ENCODE measurements at regions of chr5 and their contacts with region 1.

Region 1: DNA sequence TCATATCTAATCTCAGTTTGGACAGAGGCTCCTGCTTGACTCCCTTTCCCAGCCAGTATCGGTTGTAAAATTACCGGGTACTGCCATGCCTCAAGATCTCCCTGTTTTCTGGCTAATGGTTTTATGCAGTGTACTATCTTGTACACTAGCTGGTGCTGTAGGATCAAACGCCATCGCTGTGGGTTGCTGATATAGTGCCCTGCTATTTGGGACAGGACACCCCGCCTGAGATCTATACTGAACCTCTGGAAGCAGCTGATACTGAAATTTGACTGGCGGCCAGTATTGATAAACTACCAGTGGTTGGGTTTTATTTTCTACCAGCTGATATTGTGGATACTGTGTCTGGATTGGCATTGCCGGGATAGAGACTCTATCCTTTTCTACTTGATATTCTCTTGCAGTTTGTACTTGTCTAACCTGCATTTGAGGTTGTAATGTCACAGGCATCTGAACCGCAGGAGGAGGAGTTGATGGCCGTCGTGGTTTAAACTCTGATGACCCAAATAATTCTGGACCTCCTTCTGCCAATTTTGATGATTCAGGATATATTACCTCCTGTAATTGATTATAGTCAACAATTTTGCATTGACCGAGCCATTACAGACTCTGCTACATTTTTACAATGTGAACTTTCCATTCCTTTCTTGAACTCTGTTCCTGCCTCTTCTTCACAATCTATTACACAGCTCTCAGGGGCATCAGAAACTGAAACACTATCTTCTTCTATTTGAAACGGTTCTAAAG is 112.5 kb upstream of the LARP1 start:
- H3K4me3 ChIP-seq: no peak overlapping the region
- H3K27ac ChIP-seq: no peak overlapping the region
- H3K4me1 ChIP-seq: no peaks in the 10 kb centered on the region; the same call in 1 of the 2 replicates
- CTCF ChIP-seq: peak; percentile 70

Region 2: GRCh38 chr5:153974131-153974812 is 668.4 kb before region 1 on chr5:
- CTCF ChIA-PET with region 1: interaction called, 14 read pairs
- POLR2A ChIA-PET with region 1: no interaction called
- H3K4me3 ChIP-seq: no peak overlapping the region
- H3K27ac ChIP-seq: no peak overlapping the region
- H3K4me1 ChIP-seq: no peaks in the 10 kb centered on the region
- CTCF ChIP-seq: peak; percentile 37; the same call in 1 of the 2 replicates

Region 3: DNA sequence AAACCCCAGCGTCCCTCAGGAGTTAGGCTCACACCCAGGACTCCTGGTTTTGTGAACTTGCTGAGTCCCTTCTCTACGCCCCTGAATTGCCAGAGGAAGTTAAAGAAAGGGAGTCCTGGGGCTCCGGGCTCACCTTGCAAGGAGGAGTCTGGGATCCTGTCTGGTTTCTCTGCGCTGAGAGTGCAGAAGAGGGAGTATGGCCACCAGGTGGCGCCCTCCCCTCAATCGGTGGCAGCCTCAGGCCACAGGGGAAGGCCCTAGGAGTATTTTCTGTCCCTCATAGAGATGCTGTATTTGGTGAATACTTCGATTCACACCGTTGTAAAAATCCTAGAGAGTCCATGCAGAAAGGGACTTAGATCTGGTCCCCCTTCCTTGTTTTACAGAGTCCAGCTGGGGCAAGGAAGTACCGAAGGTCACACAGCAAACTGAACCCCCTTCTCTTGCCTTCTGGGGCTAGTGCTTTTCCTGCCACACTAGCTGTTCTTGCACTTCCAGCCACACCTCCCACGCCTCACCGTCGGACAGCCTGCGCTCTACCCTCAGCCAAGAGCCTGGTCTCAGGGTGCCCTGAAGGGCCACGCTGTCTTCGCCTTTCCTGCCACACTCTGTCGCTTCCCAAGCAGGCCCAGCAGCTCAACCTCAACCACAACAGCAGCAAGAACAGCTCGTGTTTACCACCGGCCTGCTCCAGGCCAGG is 174.9 kb before region 1 on chr5:
- CTCF ChIA-PET with region 1: interaction called, 12 read pairs
- POLR2A ChIA-PET with region 1: no interaction called
- H3K4me3 ChIP-seq: no peak overlapping the region
- H3K27ac ChIP-seq: no peak overlapping the region
- H3K4me1 ChIP-seq: peaks cover 12% of the 10 kb centered on the region
- CTCF ChIP-seq: peak; percentile 82

Region 4: GRCh38 chr5:154583545-154584496 is 58.9 kb before region 1 on chr5:
- CTCF ChIA-PET with region 1: no interaction called
- POLR2A ChIA-PET with region 1: no interaction called
- H3K4me3 ChIP-seq: no peak overlapping the region
- H3K27ac ChIP-seq: no peak overlapping the region
- H3K4me1 ChIP-seq: peaks cover 10% of the 10 kb centered on the region; the same call in 1 of the 2 replicates
- CTCF ChIP-seq: no peak

Region 5: DNA sequence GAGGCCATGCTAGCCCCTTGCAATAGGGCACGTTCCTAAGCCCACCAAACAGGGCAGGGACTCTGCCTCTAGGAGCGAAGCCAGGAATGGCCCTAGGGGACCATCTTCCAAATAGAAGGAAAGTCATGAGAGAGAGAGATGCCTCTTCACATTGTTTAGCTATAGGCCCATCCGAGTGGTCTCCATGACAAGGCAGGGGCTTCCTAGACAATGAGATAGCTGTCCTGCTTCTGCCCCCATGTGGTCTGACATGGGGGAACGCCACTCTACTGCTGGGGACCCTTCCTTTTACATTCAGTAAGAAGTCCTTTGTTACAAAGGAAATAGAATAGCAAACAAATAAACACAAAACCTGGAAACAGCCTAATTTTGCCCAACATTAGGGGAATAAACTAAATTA is 353.0 kb after region 1 on chr5:
- CTCF ChIA-PET with region 1: interaction called, 12 read pairs
- POLR2A ChIA-PET with region 1: no interaction called
- H3K4me3 ChIP-seq: no peak overlapping the region
- H3K27ac ChIP-seq: no peak overlapping the region
- H3K4me1 ChIP-seq: no peaks in the 10 kb centered on the region
- CTCF ChIP-seq: 0 out of 2 replicates have a peak, but pooled peaks have one; percentile 19